HepG2 (cell line): ENCODE measurements at regions of chr14 and their contacts with region 1.

Region 1: DNA sequence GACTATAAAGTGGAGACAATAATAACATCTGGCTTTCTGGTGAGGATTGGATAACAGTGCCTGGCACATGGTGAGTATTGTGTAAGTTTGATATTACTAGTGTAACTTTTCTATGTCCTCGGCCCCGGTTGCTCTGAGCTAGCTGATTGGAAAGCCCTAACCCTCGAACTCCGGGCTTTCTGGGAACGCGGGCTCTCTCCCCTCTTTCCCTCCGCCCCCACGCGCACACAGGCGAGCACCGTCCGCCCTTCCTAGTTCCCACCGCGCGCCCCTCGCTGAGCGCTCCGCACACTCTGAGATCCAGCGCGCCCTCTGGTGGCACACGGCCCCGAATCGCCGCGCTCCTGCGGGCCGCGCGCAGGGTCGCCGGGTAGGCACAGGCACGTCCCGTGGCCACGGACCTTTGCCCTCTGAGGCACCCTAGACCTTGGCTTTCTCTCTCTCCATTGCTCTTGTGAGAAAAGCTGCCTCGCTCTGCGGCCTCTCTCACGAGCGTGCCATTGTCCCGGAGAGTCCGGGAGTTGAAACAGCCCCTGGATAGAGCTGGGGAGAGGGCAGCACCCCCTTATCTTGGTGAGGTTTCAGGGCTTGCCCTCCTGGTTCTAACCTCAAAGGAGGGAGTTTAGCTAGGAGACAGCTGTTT is 23.2 kb upstream of the ESRRB start:
- DNase-seq: peak; percentile 43
- ATAC-seq: peak; percentile 96
- H3K4me3 ChIP-seq: peak overlapping the region in 2 of 3 experiments; percentile 28 to 59; a peak in 3 of 6 replicates
- H3K27ac ChIP-seq: no peak overlapping the region
- H3K4me1 ChIP-seq: peaks cover 12% of the 10 kb centered on the region; the same call in 1 of the 2 replicates
- H3K27me3 ChIP-seq: no peaks in the 10 kb centered on the region
- CTCF ChIP-seq: peak; percentile 100
- EP300 ChIP-seq: no peak
- POLR2A ChIP-seq: no peak
- RAD21 ChIP-seq: peak; percentile 94

Region 2: GRCh38 chr14:76050797-76051392 is 301.9 kb before region 1 on chr14:
- CTCF ChIA-PET with region 1: interaction called, 25 read pairs
- POLR2A ChIA-PET with region 1: no interaction called
- in situ Hi-C with region 1: loop called (anchors 5 kb)
- intact Hi-C with region 1: loop called (anchors 1 kb)
- DNase-seq: peak; percentile 47
- ATAC-seq: peak; percentile 62
- H3K4me3 ChIP-seq: no peak overlapping the region
- H3K27ac ChIP-seq: no peak overlapping the region
- H3K4me1 ChIP-seq: no peaks in the 10 kb centered on the region
- H3K27me3 ChIP-seq: peaks cover 0 to 10% of the 10 kb centered on the region in 2 experiments; a peak in 2 of 5 replicates
- CTCF ChIP-seq: peak; percentile 83
- EP300 ChIP-seq: no peak
- POLR2A ChIP-seq: no peak
- RAD21 ChIP-seq: peak; percentile 78

Region 3: GRCh38 chr14:76109087-76109880 is 243.5 kb before region 1 on chr14:
- CTCF ChIA-PET with region 1: no interaction called
- POLR2A ChIA-PET with region 1: no interaction called
- in situ Hi-C with region 1: no loop called
- intact Hi-C with region 1: loop called (anchors 10 kb)
- DNase-seq: no peak
- ATAC-seq: peak; percentile 79
- H3K4me3 ChIP-seq: no peak overlapping the region
- H3K27ac ChIP-seq: no peak overlapping the region
- H3K4me1 ChIP-seq: peaks cover 18% of the 10 kb centered on the region
- H3K27me3 ChIP-seq: peaks cover 0 to 38% of the 10 kb centered on the region in 2 experiments; a peak in 3 of 5 replicates
- CTCF ChIP-seq: no peak
- EP300 ChIP-seq: no peak
- POLR2A ChIP-seq: no peak
- RAD21 ChIP-seq: no peak